Esophagus squamous epithelium (tissue), 5 donors: ENCODE measurements at regions of chr6 and their contacts with region 1.

Region 1: GRCh38 chr6:46090115-46091079 is 39.4 kb upstream of the ENPP4 start:
- DNase-seq: no peak
- H3K4me3 ChIP-seq: no peak overlapping the region
- H3K27ac ChIP-seq: no peak overlapping the region
- H3K4me1 ChIP-seq: no peaks in the 10 kb centered on the region
- H3K27me3 ChIP-seq: peaks cover 0 to 14% (median 0%) of the 10 kb centered on the region in 4 donors
- CTCF ChIP-seq: peak; percentile 58 to 80 (median 68)
- POLR2A ChIP-seq: no peak

Region 2: GRCh38 chr6:46407776-46408530 is 317.6 kb after region 1 on chr6:
- intact Hi-C with region 1: loop called (anchors 10 kb)
- DNase-seq: no peak
- H3K4me3 ChIP-seq: peak overlapping the region in 1 of 4 donors; percentile 24
- H3K27ac ChIP-seq: peak overlapping the region in 3 of 4 donors; percentile 9 to 59 (median 51)
- H3K4me1 ChIP-seq: peaks cover 0 to 31% (median 0%) of the 10 kb centered on the region in 3 donors
- H3K27me3 ChIP-seq: no peaks in the 10 kb centered on the region
- CTCF ChIP-seq: no peak
- POLR2A ChIP-seq: no peak